Activated T-helper 1 cell treated with anti-CD3 and anti-CD28 coated beads, Interleukin-12 subunit alpha, Interleukin-12 subunit beta, Interleukin-2, Interleukin-4 antibody, amounts not matched to agents 30 ng/mL and 10 ng/mL and 1 ng/mL, durations not matched to agents 14 hours and 24 hours and 36 hours (primary cell): ENCODE measurements at regions of chr2 and their contacts with region 1.

Region 1: DNA sequence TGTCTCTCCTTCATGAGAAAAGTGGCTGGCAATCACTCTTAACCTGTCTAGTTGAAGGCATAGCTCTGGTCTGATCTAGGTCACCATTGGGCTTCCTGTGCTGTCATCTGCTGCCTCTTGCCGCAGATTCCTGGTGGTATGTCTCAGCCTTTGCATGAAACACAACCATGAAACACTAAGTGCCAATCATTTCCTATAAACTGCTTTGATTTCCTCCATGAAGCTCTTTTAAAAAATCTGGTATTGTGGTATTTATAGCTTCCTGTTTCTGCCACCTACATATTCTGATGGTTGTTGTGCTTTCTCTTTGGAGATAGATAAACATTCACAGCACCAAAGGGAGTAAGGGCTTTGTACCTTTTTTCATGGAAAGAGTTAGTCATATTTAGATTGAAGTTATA is 120.0 kb upstream of the EPC2 start:
- DNase-seq: peak; percentile 58
- H3K4me3 Mint-ChIP-seq: peak overlapping the region; percentile 49
- H3K27ac Mint-ChIP-seq: peak overlapping the region; percentile 95
- H3K4me1 Mint-ChIP-seq: peaks cover 84% of the 10 kb centered on the region
- H3K27me3 Mint-ChIP-seq: no peaks in the 10 kb centered on the region

Region 2: DNA sequence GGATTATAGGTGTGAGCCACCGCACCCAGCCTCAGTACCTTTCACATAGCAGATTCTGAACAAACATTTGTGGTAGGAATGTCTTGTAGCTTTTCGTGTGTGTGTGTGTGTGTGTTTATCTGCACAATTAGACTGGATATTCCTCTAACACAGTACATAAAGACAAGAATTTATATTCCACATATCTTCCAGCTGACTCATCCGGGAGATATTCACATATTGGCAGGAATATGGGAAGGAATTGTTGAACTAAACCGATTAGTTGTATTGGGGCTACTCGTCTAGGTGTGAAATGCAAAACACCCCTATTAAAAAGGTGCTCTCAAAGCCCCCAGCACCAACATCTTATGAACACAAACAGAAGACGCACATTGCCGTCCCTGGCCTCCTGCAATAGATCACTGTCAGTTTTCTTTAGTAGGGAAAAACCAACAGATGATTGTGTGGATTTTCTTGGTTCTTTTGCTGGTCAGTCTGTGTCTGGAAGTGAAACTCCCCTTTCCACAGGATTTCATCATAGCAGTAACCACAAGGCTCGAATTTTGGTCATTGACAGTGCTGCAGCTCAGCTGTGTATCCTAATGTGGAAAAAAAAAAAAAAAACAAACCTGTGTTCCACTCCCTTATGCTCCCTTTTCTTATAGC is 888.2 kb before region 1 on chr2:
- intact Hi-C with region 1: loop called (anchors 10 kb)
- DNase-seq: no peak
- H3K4me3 Mint-ChIP-seq: no peak overlapping the region
- H3K27ac Mint-ChIP-seq: no peak overlapping the region
- H3K4me1 Mint-ChIP-seq: peaks cover 21% of the 10 kb centered on the region
- H3K27me3 Mint-ChIP-seq: no peaks in the 10 kb centered on the region

Region 3: DNA sequence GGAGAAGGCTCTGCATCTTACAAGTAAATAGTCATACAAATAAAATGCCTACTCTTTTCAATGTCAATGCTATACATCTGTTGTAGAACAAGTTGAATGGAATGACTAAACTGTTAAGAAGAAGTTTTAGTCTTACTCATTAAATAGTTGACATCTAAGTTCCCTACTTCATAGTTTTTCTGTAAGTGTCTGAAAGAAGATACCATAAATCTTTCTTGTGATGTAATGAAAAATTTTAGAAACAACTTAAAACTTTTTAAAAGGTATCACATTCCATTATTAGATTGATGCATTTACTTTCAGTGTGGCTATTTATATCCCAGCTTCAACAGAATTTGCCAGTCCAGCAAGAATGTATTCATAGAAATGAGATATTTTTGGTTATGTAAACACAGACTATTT is 65.1 kb before region 1 on chr2:
- intact Hi-C with region 1: loop called (anchors 2 kb)
- DNase-seq: no peak
- H3K4me3 Mint-ChIP-seq: no peak overlapping the region
- H3K27ac Mint-ChIP-seq: no peak overlapping the region
- H3K4me1 Mint-ChIP-seq: no peaks in the 10 kb centered on the region
- H3K27me3 Mint-ChIP-seq: peaks cover 2% of the 10 kb centered on the region

Region 4: DNA sequence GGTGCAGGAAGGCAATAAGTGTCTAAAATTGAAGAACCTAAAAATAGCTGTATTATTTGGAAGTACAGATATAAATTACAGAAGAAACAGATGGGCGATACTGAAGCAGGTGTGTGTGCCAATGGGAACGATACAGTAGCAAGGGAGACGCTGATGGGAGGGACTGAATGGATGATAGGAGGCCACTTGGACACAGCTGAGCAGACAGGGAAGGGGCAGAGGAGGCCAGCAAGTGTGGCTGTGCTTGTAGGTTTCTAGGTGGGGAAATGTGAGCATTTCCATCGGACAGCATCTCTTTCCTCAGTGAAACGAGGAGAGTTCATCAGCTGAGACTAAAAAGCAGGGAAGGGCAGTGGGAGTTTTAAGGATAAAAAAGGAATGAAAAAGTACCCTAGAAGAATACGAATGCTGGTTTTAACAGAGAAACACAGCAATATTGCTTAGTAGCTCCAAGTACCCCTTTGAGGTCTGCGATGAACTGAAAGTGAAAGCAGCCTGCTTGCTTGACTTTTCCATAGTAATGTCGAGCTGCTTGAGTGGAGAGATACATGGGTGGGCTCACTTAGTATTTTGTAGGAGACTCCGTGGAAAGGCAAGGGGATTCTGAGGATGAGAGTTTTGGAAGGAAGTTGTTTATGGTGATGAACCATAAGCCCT is 28.3 kb after region 1 on chr2:
- intact Hi-C with region 1: loop called (anchors 1 kb)
- DNase-seq: peak; percentile 32
- H3K4me3 Mint-ChIP-seq: no peak overlapping the region
- H3K27ac Mint-ChIP-seq: no peak overlapping the region
- H3K4me1 Mint-ChIP-seq: peaks cover 6% of the 10 kb centered on the region
- H3K27me3 Mint-ChIP-seq: no peaks in the 10 kb centered on the region

Region 5: DNA sequence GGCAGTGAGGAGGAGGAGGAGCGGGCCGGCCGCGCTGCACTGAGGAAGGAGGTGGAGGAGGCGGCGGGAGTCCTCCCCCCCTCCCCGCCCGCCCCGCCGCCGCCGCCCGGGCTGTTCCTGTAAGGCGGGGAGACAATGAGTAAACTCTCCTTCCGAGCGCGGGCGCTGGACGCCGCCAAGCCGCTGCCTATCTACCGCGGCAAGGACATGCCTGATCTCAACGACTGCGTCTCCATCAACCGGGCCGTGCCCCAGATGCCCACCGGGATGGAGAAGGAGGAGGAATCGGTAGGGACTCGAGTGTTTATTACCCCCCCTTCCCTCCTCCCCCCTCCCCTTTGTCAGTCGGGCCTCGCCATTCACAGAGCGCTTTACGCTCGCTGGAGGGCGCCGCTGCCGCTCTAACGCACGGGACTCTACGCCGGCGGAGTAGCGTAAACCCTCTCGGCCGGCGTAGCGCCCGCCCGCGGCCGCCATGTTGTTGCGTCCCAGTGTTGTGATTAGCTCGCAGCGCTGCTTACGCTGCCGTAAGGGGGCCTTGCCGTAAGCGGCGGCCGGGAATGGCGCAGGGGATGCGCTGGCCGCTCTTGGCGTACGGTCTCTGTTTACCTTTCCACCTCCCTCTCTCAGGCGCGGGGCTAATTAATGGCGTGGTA is 120.5 kb after region 1 on chr2:
- intact Hi-C with region 1: loop called (anchors 1 kb)
- DNase-seq: peak; percentile 92
- H3K4me3 Mint-ChIP-seq: peak overlapping the region; percentile 93
- H3K27ac Mint-ChIP-seq: peak overlapping the region; percentile 96
- H3K4me1 Mint-ChIP-seq: peaks cover 31% of the 10 kb centered on the region
- H3K27me3 Mint-ChIP-seq: peaks cover 7% of the 10 kb centered on the region

Region 6: DNA sequence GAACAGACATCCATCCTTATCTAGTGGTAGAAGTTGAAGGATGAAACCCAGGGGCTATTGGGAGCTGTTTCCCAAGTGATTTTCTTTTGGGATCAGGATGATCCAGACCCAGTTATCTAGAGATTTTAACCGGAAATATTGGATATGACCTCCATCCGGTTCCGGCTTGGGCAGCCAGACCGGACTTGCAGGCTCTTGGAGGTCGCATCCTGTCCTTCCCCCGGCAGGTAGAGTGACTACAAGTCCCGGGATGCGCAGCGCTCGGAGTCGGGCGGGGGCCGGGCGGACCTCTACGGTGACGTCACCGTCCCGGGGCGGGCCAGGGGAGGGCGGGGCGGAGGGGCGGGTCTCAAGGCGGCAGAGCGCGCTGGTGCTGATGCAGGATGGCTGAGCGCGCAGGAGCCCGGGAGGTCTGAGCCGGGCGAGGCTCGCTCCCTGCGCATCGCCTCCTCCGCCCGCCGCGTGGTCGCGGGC is 350.4 kb after region 1 on chr2 and contains the start of gene KIF5C:
- intact Hi-C with region 1: loop called (anchors 5 kb)
- DNase-seq: peak; percentile 77
- H3K4me3 Mint-ChIP-seq: peak within 1 kb of the TSS; percentile 91
- H3K27ac Mint-ChIP-seq: peak within 1 kb of the TSS; percentile 83
- H3K4me1 Mint-ChIP-seq: peaks cover 19% of the 10 kb centered on the region
- H3K27me3 Mint-ChIP-seq: peaks cover 18% of the 10 kb centered on the region
- total RNA-seq, gene KIF5C: 17.9 and 20.7 TPM in 2 replicates

Region 7: DNA sequence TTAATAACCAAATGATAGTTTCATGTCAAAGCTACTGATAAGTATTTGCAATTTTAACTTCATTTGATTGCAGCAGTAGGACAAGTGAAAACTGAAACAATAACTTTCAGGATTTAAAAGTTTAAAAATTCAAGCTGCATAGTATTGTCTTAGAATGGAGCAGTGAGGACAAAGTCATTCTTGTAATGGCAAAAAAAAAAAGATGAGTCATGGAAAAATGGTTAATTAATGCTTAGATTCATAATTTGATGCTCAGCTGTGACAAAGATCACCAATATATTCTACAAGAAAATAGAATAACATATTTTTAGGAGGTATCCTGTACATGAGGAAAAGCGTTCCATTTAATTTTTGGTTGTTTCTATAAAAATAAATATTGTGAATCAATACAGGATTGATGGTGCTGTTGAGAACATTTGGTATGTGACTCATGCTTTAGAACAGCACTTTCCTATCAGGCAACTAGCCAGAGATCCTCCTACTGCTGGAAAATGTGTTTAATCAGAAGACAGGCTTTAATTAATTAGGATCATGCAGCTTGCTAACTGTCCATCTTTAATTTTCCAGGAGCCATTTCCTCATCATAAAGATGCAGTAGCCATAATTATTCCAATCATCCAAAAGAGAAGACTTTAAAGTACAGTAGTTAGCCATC is 1302.1 kb after region 1 on chr2:
- intact Hi-C with region 1: no loop called
- DNase-seq: no peak
- H3K4me3 Mint-ChIP-seq: no peak overlapping the region
- H3K27ac Mint-ChIP-seq: no peak overlapping the region
- H3K4me1 Mint-ChIP-seq: no peaks in the 10 kb centered on the region
- H3K27me3 Mint-ChIP-seq: no peaks in the 10 kb centered on the region